HEK293T (cell line): ENCODE measurements at regions of chr1 and their contacts with region 1.

Region 1: DNA sequence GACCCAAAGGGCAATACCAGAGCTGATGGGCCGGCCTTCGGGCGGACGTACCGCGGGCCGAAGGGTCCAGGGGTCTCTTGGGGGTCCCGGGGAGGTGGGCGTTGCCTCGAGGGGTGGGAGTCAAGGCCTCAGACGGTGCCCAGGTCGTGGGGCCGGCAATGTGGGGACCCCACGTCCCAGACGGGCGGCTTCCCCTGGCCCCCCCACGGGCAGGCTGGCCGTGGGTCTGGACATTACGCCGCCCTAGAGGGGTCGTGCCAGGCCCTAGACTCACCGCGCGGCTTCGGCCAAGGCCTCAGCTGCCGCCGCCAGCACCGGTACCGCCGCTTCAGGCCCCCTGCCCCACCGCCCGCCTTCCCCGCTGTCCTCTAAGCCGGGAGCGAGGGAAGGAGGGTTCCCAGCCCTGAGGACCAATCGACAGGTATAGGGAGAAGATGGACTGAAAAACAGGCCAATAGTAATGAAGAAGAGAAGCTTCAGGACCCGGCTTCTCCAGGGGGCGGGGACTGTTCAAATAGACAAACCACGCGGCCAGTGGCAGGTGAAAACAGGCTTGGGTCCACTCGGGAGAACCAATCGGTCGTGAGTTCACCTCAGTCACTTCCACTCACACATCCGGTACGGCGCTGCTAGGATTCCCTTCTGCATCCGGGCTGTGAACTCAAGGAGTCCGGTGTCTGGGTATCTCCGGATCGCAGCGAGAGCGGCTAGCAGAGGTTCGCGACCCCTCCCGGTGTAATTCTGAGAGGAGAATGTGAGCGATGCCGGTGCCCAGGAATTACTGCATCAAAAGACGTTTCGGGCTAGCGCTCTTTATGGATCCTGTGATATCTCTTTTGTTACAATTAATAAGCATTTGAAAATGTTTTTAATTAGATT is at the start of gene MTOR:
- DNase-seq: peak; percentile 97

Region 2: GRCh38 chr1:11248155-11248554 is 14.3 kb before region 1 on chr1:
- CTCF ChIA-PET with region 1: no interaction called
- POLR2A ChIA-PET with region 1: interaction called, 36 read pairs
- DNase-seq: no peak

Region 3: GRCh38 chr1:11272832-11273594 is 10.6 kb after region 1 on chr1 and contains the start of gene UBIAD1:
- CTCF ChIA-PET with region 1: no interaction called
- POLR2A ChIA-PET with region 1: interaction called, 46 read pairs
- DNase-seq: peak; percentile 96